ENCODE measurements at regions of chr16 and their contacts with region 1.

Region 1: DNA sequence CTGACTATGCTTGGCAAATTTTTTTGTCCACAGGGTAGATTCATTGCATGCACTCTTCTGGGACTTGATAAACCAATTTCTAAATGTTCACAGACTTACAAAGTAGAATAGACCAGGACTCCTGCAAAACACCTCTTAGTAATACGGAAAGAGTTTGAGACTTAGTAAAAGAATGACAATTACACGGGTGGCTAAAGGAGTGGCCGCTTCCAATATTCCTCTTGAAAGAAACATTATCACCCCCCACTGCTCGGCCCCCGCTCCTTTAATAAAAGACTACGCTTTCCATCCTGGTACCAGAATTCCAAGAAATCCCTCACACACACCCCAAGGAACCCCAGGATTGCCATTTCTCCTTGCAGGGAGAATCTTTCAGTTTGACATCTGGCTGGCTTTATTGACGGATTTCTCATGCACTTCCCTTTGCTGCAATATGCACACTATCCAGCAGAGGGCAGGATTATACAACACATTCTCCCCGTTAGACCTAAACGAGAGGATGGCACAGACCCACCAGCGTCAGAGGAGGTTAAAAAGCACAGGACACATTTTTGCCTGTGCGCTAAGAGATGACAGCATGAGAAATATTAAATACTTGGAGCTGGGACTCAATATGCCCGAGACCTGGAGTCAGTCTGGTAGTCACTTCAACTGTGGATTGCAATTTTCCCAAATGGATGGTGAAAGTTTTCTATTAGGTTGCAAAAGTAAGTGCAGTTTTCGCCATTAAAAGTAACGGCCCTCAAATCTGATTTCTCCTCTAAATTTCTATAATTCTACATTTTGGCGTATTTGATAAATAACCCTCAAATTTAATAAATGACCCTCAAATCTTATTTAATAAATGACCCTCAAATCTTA is 46.6 kb upstream of the NUDT7 start:
- DNase-seq: peak; percentile 72 to 78
- H3K4me3 ChIP-seq: no peak overlapping the region
- H3K4me3 Mint-ChIP-seq: no peak overlapping the region
- H3K27ac Mint-ChIP-seq: no peak overlapping the region
- H3K4me1 ChIP-seq: peaks cover 4% of the 10 kb centered on the region; the same call in 1 of the 2 replicates
- H3K4me1 Mint-ChIP-seq: no peaks in the 10 kb centered on the region
- H3K27me3 ChIP-seq: no peaks in the 10 kb centered on the region; the same call in 1 of the 2 replicates
- H3K27me3 Mint-ChIP-seq: peaks cover 6% of the 10 kb centered on the region
- CTCF ChIP-seq: peak; percentile 86 to 93

Region 2: DNA sequence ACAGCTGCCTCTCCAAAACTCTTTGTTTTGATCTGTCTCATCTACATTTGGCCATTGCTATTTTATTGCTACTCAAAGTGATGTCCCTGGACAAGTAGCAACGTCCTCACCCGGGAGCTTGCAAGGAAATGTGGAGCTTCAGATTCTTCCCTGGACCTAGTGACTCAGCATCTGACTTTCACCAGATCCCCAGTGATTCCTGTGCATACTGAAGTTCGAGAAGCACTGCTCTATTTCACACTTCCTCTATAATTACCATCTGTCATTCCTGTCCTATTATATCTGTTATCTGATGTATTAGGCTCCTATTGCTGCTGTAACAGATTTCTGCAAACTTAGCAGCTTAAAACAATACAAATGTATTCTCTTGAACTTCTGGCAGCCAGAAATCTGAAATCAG is 84.1 kb after region 1 on chr16:
- CTCF ChIA-PET with region 1: no interaction called
- POLR2A ChIA-PET with region 1: no interaction called
- intact Hi-C with region 1: loop called (anchors 5 kb)
- DNase-seq: no peak
- H3K4me3 ChIP-seq: no peak overlapping the region
- H3K4me3 Mint-ChIP-seq: no peak overlapping the region
- H3K27ac Mint-ChIP-seq: no peak overlapping the region
- H3K4me1 ChIP-seq: no peaks in the 10 kb centered on the region
- H3K4me1 Mint-ChIP-seq: no peaks in the 10 kb centered on the region
- H3K27me3 ChIP-seq: no peaks in the 10 kb centered on the region
- H3K27me3 Mint-ChIP-seq: no peaks in the 10 kb centered on the region
- CTCF ChIP-seq: no peak

Region 3: DNA sequence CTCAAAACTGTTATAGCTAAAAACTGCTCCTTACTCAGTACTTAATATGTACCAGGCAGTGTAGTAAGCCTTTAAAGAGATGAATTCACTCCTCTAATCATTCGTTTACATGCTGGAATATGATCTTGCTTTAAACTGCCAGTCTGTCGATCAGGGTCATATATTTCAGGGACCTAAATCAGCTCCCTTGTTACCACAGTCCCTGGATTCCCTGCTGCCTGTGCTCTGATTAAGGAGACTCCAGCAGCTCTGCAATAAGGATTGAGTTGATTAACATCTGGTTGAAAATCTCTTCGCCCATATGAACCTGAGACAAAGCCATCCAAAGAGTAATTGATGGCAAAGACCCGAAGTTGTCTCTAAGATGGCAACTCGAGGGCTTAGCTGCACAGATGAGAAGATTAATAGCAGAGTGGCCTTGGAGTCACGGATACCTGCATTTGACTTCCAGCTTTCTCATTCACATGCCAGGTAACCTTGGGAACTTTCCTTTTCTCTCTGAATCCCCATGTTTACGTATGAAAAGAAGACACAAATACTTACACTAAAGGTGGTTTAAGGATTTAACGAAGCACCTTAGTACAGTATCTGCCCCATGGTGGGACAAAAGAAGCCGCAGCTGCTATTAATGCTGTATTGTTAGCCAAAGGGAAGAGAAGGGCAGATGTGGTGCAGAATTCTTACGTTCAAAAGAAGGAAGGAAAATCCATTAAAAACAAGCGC is 180.9 kb after region 1 on chr16:
- CTCF ChIA-PET with region 1: no interaction called
- POLR2A ChIA-PET with region 1: no interaction called
- intact Hi-C with region 1: loop called (anchors 5 kb)
- DNase-seq: no peak
- H3K4me3 ChIP-seq: no peak overlapping the region
- H3K4me3 Mint-ChIP-seq: no peak overlapping the region
- H3K27ac Mint-ChIP-seq: no peak overlapping the region
- H3K4me1 ChIP-seq: no peaks in the 10 kb centered on the region
- H3K4me1 Mint-ChIP-seq: no peaks in the 10 kb centered on the region
- H3K27me3 ChIP-seq: no peaks in the 10 kb centered on the region; the same call in 1 of the 2 replicates
- H3K27me3 Mint-ChIP-seq: peaks cover 35% of the 10 kb centered on the region
- CTCF ChIP-seq: no peak

Region 4: GRCh38 chr16:77971306-77972271 is 295.9 kb after region 1 on chr16:
- CTCF ChIA-PET with region 1: interaction called, 4 read pairs
- POLR2A ChIA-PET with region 1: no interaction called
- intact Hi-C with region 1: loop called (anchors 1 kb)
- DNase-seq: peak; percentile 78 to 80
- H3K4me3 ChIP-seq: no peak overlapping the region
- H3K4me3 Mint-ChIP-seq: no peak overlapping the region
- H3K27ac Mint-ChIP-seq: no peak overlapping the region
- H3K4me1 ChIP-seq: no peaks in the 10 kb centered on the region; the same call in 1 of the 2 replicates
- H3K4me1 Mint-ChIP-seq: no peaks in the 10 kb centered on the region
- H3K27me3 ChIP-seq: no peaks in the 10 kb centered on the region
- H3K27me3 Mint-ChIP-seq: peaks cover 8% of the 10 kb centered on the region
- CTCF ChIP-seq: peak; percentile 84 to 95

Region 5: DNA sequence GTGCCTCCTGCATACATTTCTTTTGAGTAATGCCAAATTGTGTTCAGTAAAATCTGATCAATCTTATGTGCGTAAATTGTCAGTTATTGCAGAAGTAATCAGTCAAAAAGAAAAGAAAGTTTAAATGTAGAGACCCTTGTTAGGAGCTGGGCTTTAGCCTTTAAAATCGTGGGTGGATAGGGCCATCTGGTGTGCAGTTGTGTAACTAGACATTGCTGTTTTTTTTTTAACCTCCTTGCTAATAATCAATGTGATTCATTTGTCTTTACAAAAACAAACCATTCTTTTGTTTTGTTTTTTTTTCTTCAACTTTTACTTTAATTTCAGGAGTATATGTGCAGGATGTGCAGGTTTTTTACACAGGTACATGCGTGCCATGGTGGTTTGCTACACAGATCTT is 418.5 kb after region 1 on chr16:
- CTCF ChIA-PET with region 1: interaction called, 3 read pairs
- POLR2A ChIA-PET with region 1: no interaction called
- intact Hi-C with region 1: loop called (anchors 1 kb)
- DNase-seq: peak in 1 of 2 experiments; percentile 34
- H3K4me3 ChIP-seq: no peak overlapping the region
- H3K4me3 Mint-ChIP-seq: no peak overlapping the region
- H3K27ac Mint-ChIP-seq: no peak overlapping the region
- H3K4me1 ChIP-seq: no peaks in the 10 kb centered on the region
- H3K4me1 Mint-ChIP-seq: peaks cover 7% of the 10 kb centered on the region
- H3K27me3 ChIP-seq: no peaks in the 10 kb centered on the region
- H3K27me3 Mint-ChIP-seq: peaks cover 2% of the 10 kb centered on the region
- CTCF ChIP-seq: peak in 1 of 2 experiments; percentile 45